ENCODE measurements at regions of chrX and their contacts with region 1.

Region 1: GRCh38 chrX:64394874-64395567 is at the start of gene MTMR8:
- DNase-seq: peak; percentile 58
- ATAC-seq: peak; percentile 92
- H3K4me3 Mint-ChIP-seq: peak within 1 kb of the TSS; percentile 95
- H3K27ac Mint-ChIP-seq: peak within 1 kb of the TSS; percentile 82
- H3K4me1 Mint-ChIP-seq: peaks cover 29% of the 10 kb centered on the region
- H3K27me3 Mint-ChIP-seq: no peaks in the 10 kb centered on the region
- CTCF ChIP-seq: no peak
- total RNA-seq, gene MTMR8: 4.3 and 4.7 TPM in 2 replicates

Region 2: DNA sequence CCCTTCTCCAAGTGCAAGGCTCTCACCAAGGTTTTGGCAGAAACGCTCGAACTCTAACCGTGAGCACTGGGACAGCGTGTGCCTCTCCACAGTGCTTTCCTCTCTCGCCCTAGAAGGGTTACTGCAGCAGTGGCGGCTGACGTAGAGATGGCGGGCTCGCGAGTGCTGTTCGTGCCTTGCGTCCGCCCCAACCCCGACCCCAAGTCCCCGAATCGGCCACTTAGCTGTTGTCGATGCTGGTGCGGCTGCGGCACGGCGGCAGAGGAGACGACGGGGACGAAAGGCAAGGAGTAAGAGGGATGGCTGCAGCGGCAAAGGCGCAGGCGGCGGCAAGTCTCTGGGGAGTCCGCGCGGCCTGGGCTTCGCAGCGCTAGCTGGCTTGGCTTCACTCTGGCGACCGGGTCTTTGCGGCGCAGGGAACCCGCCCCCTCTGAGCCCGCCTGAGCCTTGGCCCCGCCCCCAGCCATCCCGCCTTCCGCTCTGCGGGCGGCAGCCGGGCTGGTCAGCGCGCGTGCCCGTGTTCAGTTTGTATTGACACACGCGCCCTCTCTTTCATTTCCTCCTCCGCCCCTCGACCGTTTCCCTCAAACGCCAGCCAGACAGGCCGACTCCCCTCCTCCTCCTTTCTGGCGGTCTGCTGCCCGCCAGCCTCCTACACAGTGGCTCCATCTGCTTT is 1043.9 kb before region 1 on chrX and contains the start of gene SPIN4:
- CTCF ChIA-PET with region 1: no interaction called
- POLR2A ChIA-PET with region 1: no interaction called
- intact Hi-C with region 1: loop called (anchors 1 kb)
- DNase-seq: peak; percentile 67
- ATAC-seq: peak; percentile 97
- H3K4me3 Mint-ChIP-seq: peak within 1 kb of the TSS; percentile 94
- H3K27ac Mint-ChIP-seq: peak within 1 kb of the TSS; percentile 80
- H3K4me1 Mint-ChIP-seq: peaks cover 18% of the 10 kb centered on the region
- H3K27me3 Mint-ChIP-seq: no peaks in the 10 kb centered on the region
- CTCF ChIP-seq: no peak
- total RNA-seq, gene SPIN4: 2.1 and 2.4 TPM in 2 replicates

Region 3: DNA sequence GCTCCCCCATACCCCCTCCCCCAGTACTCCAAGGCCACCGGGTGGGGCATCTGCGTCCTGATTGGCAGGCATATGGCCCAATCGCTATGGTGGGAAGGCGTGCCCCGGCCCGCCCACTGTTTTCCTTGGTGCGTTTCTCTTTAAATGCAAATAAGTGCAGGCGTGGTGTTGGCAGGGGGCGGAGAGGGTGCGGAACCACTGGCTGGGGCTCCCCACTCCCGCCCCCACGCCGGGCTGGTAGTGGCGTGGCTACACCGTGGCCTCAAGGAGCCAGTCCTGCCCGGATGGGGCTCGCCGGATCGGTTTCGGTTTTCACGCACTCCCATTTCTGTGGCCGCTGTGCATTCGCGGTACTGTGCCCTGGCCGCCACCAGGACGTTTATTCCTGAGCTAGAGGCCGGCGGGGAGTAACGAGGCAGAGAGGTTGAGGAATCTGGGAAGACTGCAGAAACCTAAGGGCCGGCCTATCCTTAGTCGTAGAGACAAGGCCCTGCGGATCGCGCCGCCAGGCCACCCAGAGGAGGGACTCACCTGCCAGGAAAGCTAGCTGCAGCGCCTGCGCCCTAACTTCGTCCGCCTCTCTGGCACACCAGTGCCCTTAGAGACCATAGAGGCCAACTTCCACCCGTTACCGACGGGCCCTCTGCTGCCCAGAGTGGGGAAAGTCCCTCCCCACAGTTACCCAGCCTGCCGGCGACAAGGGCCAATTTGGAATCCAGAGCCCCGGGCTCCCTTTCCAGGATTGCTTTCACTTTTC is 189.1 kb before region 1 on chrX:
- CTCF ChIA-PET with region 1: no interaction called
- POLR2A ChIA-PET with region 1: interaction called, 5 read pairs
- intact Hi-C with region 1: loop called (anchors 1 kb)
- DNase-seq: peak; percentile 75
- ATAC-seq: peak; percentile 88
- H3K4me3 Mint-ChIP-seq: peak overlapping the region; percentile 92
- H3K27ac Mint-ChIP-seq: peak overlapping the region; percentile 95
- H3K4me1 Mint-ChIP-seq: peaks cover 18% of the 10 kb centered on the region
- H3K27me3 Mint-ChIP-seq: no peaks in the 10 kb centered on the region
- CTCF ChIP-seq: no peak

Region 4: GRCh38 chrX:65635378-65635777 is 1240.4 kb after region 1 on chrX:
- CTCF ChIA-PET with region 1: no interaction called
- POLR2A ChIA-PET with region 1: no interaction called
- intact Hi-C with region 1: no loop called
- DNase-seq: no peak
- ATAC-seq: no peak
- H3K4me3 Mint-ChIP-seq: no peak overlapping the region
- H3K27ac Mint-ChIP-seq: no peak overlapping the region
- H3K4me1 Mint-ChIP-seq: no peaks in the 10 kb centered on the region
- H3K27me3 Mint-ChIP-seq: no peaks in the 10 kb centered on the region
- CTCF ChIP-seq: no peak